ENCODE measurements at regions of chr7 and their contacts with region 1.

Region 1: GRCh38 chr7:93245525-93246432 is 13.6 kb downstream of the VPS50 start:
- DNase-seq: no peak
- ATAC-seq: peak; percentile 83

Region 2: DNA sequence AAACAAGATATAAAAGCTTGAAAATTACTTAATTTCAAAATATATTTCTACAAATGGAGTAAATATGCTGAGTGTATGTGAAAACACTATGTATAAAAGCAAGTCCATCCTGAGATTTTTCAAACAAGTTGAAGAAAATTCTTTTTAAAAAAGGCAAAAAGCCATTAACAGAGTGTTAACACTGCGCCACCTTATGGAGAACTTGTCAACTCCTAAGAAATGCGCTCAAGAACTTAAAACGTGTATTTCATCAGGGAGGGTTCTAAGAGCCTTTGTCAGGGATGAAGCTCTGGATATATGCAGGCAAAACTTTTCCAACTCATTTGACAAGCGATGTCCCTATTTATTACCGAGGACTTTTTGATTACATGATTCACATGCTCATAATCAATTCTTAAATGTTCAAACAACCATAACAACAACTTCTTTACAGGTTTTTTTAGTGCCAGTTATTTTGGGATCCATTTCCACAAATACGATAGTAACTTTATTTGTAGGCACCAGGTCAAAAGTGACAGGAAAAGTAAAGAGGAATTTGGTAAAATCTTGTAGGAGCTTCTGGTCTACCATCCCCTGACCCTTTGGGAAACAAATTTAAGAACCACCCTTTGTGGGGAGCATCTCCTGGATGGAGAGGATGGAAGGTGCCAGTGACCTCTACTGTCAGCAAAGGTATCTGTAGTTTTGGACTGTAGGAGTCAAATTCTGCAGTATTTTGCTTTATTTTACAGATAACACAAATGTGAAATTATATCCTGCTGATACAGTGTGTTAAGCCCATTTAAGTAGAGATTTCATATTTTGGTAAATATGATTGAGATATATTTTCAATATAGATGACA is 305.5 kb after region 1 on chr7:
- intact Hi-C with region 1: loop called in 1 of 2 experiments (anchors 10 kb)
- DNase-seq: no peak
- ATAC-seq: no peak

Measured in left colon (tissue), 2 donors.